ENCODE measurements at regions of chr11 and their contacts with region 1.

Region 1: GRCh38 chr11:71946144-71946571 is 17.3 kb downstream of the RNF121 start:
- DNase-seq: no peak
- H3K4me3 Mint-ChIP-seq: no peak overlapping the region
- H3K27ac Mint-ChIP-seq: peak overlapping the region; percentile 75
- H3K4me1 Mint-ChIP-seq: peaks cover 17% of the 10 kb centered on the region
- H3K27me3 Mint-ChIP-seq: no peaks in the 10 kb centered on the region

Region 2: GRCh38 chr11:71962428-71963038 is 16.4 kb after region 1 on chr11:
- intact Hi-C with region 1: loop called (anchors 2 kb)
- DNase-seq: no peak
- H3K4me3 Mint-ChIP-seq: peak overlapping the region; percentile 17
- H3K27ac Mint-ChIP-seq: peak overlapping the region; percentile 82
- H3K4me1 Mint-ChIP-seq: peaks cover 24% of the 10 kb centered on the region
- H3K27me3 Mint-ChIP-seq: no peaks in the 10 kb centered on the region